Activated B cell treated with CpG ODN at 0.5 μM for 24 hours (primary cell): ENCODE measurements at regions of chr1 and their contacts with region 1.

Region 1: GRCh38 chr1:175597969-175598765 is 145.2 kb downstream of the TNR start:
- DNase-seq: no peak
- ATAC-seq: peak; percentile 34
- H3K4me3 Mint-ChIP-seq: peak overlapping the region; percentile 70
- H3K27ac Mint-ChIP-seq: peak overlapping the region; percentile 86
- H3K4me1 Mint-ChIP-seq: peaks cover 57% of the 10 kb centered on the region
- H3K27me3 Mint-ChIP-seq: peaks cover 2% of the 10 kb centered on the region
- CTCF ChIP-seq: no peak

Region 2: GRCh38 chr1:175514387-175514953 is 83.7 kb before region 1 on chr1:
- CTCF ChIA-PET with region 1: no interaction called
- POLR2A ChIA-PET with region 1: no interaction called
- intact Hi-C with region 1: loop called (anchors 5 kb)
- DNase-seq: no peak
- ATAC-seq: peak; percentile 72
- H3K4me3 Mint-ChIP-seq: peak overlapping the region; percentile 6
- H3K27ac Mint-ChIP-seq: no peak overlapping the region
- H3K4me1 Mint-ChIP-seq: peaks cover 31% of the 10 kb centered on the region
- H3K27me3 Mint-ChIP-seq: peaks cover 1% of the 10 kb centered on the region
- CTCF ChIP-seq: no peak

Region 3: DNA sequence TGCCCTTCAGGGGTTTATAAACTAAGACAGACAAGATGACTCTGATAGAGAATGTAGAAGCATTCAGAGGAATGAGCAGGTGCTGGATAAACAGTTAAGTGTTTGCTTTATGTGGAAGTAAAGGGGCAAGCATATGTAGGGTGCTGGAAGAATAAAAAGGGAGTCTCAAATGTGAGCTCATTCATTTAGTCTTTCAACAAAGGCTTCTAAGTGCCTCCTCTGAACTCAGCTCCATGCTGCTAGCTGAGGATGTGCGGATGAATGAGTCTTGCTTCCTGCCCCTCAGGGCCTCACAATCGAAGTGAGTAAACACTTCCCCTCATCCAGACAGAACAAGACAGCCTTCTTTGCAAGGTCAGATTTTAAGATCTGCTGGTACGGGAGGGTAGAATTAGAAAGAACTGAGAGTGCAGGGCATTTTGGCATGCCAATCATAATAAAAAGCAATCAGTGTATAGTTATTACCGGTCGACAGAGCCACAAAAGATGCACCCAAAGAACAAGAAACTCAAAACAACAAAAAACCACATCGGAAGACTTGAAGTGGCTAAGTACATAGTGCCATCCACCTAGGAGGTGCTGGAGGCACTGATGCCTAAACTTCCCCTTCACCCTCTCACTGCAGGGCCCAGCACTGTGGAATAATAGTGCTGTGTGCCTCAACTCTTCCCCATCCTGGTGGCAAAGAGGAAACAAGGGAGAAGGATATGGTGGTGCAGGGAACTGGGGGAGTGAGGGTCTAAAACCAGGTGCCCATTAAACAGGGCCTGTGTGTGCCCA is 75.4 kb after region 1 on chr1:
- CTCF ChIA-PET with region 1: interaction called, 3 read pairs
- POLR2A ChIA-PET with region 1: interaction called, 3 read pairs
- intact Hi-C with region 1: loop called (anchors 2 kb)
- DNase-seq: no peak
- ATAC-seq: peak; percentile 89
- H3K4me3 Mint-ChIP-seq: peak overlapping the region; percentile 62
- H3K27ac Mint-ChIP-seq: peak overlapping the region; percentile 82
- H3K4me1 Mint-ChIP-seq: peaks cover 52% of the 10 kb centered on the region
- H3K27me3 Mint-ChIP-seq: no peaks in the 10 kb centered on the region
- CTCF ChIP-seq: no peak